ENCODE measurements at regions of chr9 and their contacts with region 1.

Region 1: GRCh38 chr9:130041648-130042405 is 1.2 kb downstream of the FNBP1 start:
- DNase-seq: no peak
- ATAC-seq: peak; percentile 21; the same call in 1 of the 2 replicates
- H3K4me3 ChIP-seq: peak overlapping the region; percentile 79 to 86
- H3K27ac ChIP-seq: peak overlapping the region; percentile 64; the same call in 1 of the 2 replicates
- H3K4me1 ChIP-seq: peaks cover 0 to 16% of the 10 kb centered on the region in 2 experiments; a peak in 3 of 4 replicates
- H3K27me3 ChIP-seq: no peaks in the 10 kb centered on the region
- CTCF ChIP-seq: no peak
- POLR2A ChIP-seq: no peak
- RAD21 ChIP-seq: no peak

Region 2: DNA sequence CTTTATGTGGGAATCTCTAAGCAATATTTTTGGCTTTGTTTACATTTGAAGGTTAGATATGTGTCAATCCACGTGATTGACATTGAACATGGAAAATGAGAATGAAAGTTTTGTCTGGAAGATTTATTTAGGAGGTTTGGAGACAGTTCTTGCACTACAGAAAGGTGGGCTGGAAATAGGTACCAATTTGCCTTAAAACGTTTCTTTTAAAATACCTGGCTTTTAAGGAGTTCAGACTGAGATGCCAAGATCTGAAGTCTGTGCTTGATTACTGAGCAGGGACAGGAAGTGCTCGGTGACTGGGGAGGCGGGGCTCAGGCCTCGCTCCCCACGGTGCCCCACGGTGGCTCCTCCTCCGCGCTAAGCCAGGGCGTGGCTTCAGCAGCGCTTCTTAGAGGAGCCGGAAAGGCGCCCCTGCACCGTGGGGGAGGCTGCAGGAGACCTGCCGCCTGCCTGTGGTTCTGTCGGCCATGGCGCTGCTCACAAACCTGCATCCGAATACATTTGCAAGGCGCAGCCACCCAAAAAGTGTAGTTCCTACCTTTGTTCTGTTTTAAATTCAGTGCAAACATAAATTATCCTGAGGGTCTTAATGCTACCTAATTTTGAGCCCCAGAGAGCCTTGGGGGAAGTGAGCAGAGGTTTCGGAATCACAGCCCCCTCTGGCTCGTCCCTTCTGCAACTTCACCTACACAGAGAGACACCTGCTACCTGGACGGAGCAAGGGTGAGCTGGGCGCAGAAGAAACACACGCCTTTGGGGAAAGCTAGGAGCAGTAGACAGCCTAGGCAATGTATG is 157.4 kb before region 1 on chr9:
- CTCF ChIA-PET with region 1: interaction called, 5 read pairs
- POLR2A ChIA-PET with region 1: no interaction called
- RAD21 ChIA-PET with region 1: no interaction called
- intact Hi-C with region 1: loop called (anchors 2 kb)
- DNase-seq: peak; percentile 64
- ATAC-seq: peak; percentile 88
- H3K4me3 ChIP-seq: peak overlapping the region; percentile 33 to 50
- H3K27ac ChIP-seq: peak overlapping the region; percentile 70
- H3K4me1 ChIP-seq: peaks cover 22 to 31% of the 10 kb centered on the region in 2 experiments
- H3K27me3 ChIP-seq: no peaks in the 10 kb centered on the region
- CTCF ChIP-seq: no peak
- POLR2A ChIP-seq: peak; percentile 61
- RAD21 ChIP-seq: no peak

Region 3: DNA sequence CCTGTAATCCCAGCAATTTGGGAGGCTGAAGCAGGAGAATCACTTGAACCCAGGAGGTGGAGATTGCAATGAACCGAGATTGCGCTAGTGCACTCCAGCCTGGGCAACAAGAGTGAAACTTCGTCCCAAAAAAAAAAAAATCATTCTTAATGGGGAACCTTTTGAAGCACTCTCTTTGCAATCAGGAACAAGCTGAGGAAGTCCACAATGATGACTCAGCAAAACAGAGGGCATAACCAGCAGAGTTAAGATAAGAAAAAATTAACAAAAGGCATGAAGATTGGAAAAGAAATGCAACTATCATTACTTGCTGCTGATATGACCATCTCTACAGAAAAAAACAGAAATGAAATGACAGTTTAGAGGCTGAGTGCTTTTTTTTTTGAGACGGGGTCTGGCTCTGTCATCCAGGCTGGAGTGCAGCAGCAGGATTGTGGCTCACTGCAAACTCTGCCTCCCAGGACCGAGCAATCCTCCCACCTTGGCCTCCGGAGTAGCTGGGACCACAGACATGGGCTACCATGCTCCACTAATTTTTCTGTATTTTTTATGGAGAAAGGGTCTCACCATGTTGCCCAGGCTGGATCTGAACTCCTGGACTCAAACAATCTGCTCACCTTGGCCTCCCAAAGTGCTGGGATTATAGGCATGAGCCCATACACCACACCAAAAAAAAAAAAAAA is 86.8 kb before region 1 on chr9:
- CTCF ChIA-PET with region 1: no interaction called
- POLR2A ChIA-PET with region 1: no interaction called
- RAD21 ChIA-PET with region 1: no interaction called
- intact Hi-C with region 1: no loop called
- DNase-seq: no peak
- ATAC-seq: no peak
- H3K4me3 ChIP-seq: no peak overlapping the region
- H3K27ac ChIP-seq: no peak overlapping the region
- H3K4me1 ChIP-seq: 0 out of 4 replicates have a peak, but pooled peaks cover 0 to 4% of the 10 kb centered on the region in 2 experiments
- H3K27me3 ChIP-seq: no peaks in the 10 kb centered on the region
- CTCF ChIP-seq: no peak
- POLR2A ChIP-seq: no peak
- RAD21 ChIP-seq: no peak

Measured in HCT116 (cell line).